Aorta (tissue), 5 donors: ENCODE measurements at regions of chr7 and their contacts with region 1.

Region 1: DNA sequence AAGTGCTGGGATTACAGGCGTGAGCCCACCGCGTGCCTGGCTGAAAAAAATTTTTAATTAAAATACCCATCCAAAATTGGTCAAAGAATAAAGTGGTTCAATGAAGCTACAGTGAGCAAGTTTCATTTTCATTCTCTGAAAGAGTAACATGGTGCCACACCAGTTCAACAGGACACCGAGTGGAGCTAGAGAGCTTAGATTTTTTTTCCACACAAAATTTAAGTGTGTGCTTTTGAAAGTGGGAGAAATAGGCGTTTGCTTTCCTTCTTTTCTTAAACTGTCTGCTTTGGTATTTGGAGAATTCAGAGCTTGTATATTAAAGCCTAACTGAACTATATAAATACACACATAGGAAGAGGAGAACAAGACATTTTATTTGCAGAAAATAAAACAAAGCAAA is 43.4 kb downstream of the BPGM start:
- DNase-seq: no peak
- ATAC-seq: peak; percentile 81
- H3K4me3 ChIP-seq: peak overlapping the region; percentile 31 to 59
- H3K27ac ChIP-seq: peak overlapping the region in 1 of 2 donors; percentile 87
- H3K4me1 ChIP-seq: peaks cover 4 to 15% of the 10 kb centered on the region in 2 donors
- H3K27me3 ChIP-seq: no peaks in the 10 kb centered on the region

Region 2: GRCh38 chr7:134368851-134369552 is 321.0 kb before region 1 on chr7:
- intact Hi-C with region 1: no loop called
- DNase-seq: no peak
- ATAC-seq: peak; percentile 51
- H3K4me3 ChIP-seq: no peak overlapping the region
- H3K27ac ChIP-seq: no peak overlapping the region
- H3K4me1 ChIP-seq: no peaks in the 10 kb centered on the region
- H3K27me3 ChIP-seq: no peaks in the 10 kb centered on the region

Region 3: GRCh38 chr7:134730411-134730829 is 40.4 kb after region 1 on chr7:
- intact Hi-C with region 1: loop called (anchors 5 kb)
- DNase-seq: no peak
- ATAC-seq: peak; percentile 49
- H3K4me3 ChIP-seq: no peak overlapping the region
- H3K27ac ChIP-seq: peak overlapping the region; percentile 95 to 98
- H3K4me1 ChIP-seq: peaks cover 7 to 12% of the 10 kb centered on the region in 2 donors
- H3K27me3 ChIP-seq: no peaks in the 10 kb centered on the region

Region 4: DNA sequence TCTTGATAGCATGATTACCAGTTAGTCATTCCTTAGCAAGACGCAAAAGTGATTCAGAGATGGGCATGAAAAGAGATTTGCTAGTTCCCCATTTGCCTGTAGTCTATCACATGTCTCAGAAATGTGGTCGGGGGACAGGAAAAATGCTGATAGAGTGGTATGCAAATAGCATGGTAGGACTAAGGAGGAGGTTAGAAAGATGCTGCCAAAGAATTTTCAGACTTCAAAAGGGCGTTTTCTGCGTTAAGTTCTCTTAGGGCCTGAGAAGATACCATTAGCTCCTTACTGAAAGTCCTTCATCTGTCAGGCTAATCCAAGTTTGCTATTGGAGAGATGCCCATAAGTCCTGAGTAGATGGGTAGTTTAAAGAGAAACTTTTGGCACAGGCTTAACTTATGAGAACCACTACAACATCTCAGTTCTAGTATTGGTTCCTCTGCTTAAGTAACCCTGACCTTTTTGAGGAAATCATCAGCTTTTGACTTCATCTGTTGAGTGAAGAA is 92.2 kb after region 1 on chr7:
- intact Hi-C with region 1: loop called (anchors 2 to 5 kb)
- DNase-seq: no peak
- ATAC-seq: no peak
- H3K4me3 ChIP-seq: peak overlapping the region; percentile 99 to 100
- H3K27ac ChIP-seq: peak overlapping the region; percentile 79 to 100
- H3K4me1 ChIP-seq: peaks cover 6 to 19% of the 10 kb centered on the region in 2 donors
- H3K27me3 ChIP-seq: no peaks in the 10 kb centered on the region

Region 5: DNA sequence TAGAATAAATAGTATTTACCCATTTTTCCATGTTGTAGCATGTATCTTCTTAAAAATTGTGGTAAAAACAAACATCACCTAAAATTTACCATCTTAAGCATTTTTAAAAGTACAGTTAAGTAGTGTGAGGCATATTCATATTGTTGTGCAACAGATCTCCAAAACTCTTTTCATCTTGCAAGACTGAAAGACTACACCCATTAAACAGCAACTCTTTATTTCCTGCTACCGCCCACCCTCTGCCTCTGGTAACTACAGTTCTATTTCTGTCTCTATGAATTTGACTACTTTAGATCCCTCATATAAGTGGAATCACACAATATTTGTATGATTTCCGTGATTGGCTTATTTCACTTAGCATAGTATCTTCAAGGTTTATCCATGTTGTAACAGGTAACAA is 256.2 kb after region 1 on chr7:
- intact Hi-C with region 1: loop called (anchors 5 kb)
- DNase-seq: no peak
- ATAC-seq: no peak
- H3K4me3 ChIP-seq: no peak overlapping the region
- H3K27ac ChIP-seq: no peak overlapping the region
- H3K4me1 ChIP-seq: peaks cover 0 to 2% of the 10 kb centered on the region in 2 donors
- H3K27me3 ChIP-seq: no peaks in the 10 kb centered on the region

Region 6: GRCh38 chr7:135170274-135170997 is 480.4 kb after region 1 on chr7 and contains the start of gene CYREN:
- intact Hi-C with region 1: loop called (anchors 2 to 5 kb)
- DNase-seq: peak; percentile 98 to 99
- ATAC-seq: peak; percentile 98
- H3K4me3 ChIP-seq: peak within 1 kb of the TSS; percentile 30 to 74
- H3K27ac ChIP-seq: peak within 1 kb of the TSS; percentile 52 to 94
- H3K4me1 ChIP-seq: peaks cover 2 to 13% of the 10 kb centered on the region in 2 donors
- H3K27me3 ChIP-seq: no peaks in the 10 kb centered on the region
- total RNA-seq, gene CYREN: 22.7 to 31.7 TPM